Heart right ventricle (tissue), 16 donors: ENCODE measurements at regions of chr1 and their contacts with region 1.

Region 1: DNA sequence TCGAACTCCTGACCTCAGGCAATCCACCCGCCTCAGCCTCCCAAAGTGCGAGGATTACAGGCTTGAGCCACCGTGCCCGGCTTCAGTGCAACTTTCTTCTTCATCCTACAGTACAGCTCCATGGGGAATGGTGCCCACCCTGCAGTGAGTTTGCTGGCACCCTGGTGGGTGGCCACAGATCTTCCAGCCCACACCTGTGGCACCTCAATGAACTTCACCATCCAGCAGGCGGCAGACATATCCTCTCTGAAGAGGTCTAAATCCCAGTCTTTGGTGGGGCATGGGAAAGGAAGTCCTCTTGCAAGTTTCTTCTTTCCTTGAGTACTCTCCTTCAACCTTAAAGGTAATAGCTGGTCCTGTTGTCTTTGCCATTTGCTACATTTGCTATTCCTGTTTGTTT is 18.1 kb upstream of the ZBTB8A start:
- DNase-seq: no peak
- ATAC-seq: no peak
- H3K4me3 ChIP-seq: peak overlapping the region in 3 of 10 donors; percentile 41 to 46 (median 45)
- H3K27ac ChIP-seq: no peak overlapping the region
- H3K4me1 ChIP-seq: peaks cover 0 to 10% (median 0%) of the 10 kb centered on the region in 9 donors
- H3K27me3 ChIP-seq: no peaks in the 10 kb centered on the region
- CTCF ChIP-seq: no peak

Region 2: GRCh38 chr1:32377541-32378220 is 143.5 kb before region 1 on chr1:
- intact Hi-C with region 1: no loop called
- DNase-seq: no peak
- ATAC-seq: no peak
- H3K4me3 ChIP-seq: no peak overlapping the region
- H3K27ac ChIP-seq: no peak overlapping the region
- H3K4me1 ChIP-seq: no peaks in the 10 kb centered on the region
- H3K27me3 ChIP-seq: no peaks in the 10 kb centered on the region
- CTCF ChIP-seq: no peak

Region 3: DNA sequence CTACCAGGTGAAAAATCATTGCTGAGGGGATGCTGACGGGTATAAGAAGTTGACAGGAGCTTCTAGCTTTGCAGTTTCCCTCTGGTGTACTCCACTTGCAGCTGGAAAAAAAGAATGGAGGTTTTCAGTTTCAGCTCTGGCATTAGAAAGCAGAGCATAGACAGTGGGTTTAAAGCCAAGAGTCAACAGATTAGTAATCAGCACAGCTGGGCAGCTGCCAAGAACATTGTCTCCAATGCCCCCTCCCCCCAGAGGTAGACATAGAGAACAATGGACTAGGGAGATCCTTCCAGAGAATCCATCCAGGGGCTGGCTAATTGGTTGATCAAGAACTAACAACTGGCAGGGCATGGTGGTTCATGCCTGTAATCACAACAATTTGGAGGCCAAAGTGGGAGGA is 66.4 kb before region 1 on chr1:
- intact Hi-C with region 1: loop called in 1 of 10 experiments (anchors 5 kb)
- DNase-seq: peak; percentile 11 to 23
- ATAC-seq: peak in 3 of 8 donors; percentile 34 to 66 (median 53)
- H3K4me3 ChIP-seq: no peak overlapping the region
- H3K27ac ChIP-seq: no peak overlapping the region
- H3K4me1 ChIP-seq: peaks cover 0 to 7% (median 0%) of the 10 kb centered on the region in 9 donors
- H3K27me3 ChIP-seq: peaks cover 0 to 4% (median 0%) of the 10 kb centered on the region in 7 donors
- CTCF ChIP-seq: no peak

Region 4: GRCh38 chr1:32464716-32465577 is 56.2 kb before region 1 on chr1 and contains the start of gene ZBTB8B:
- intact Hi-C with region 1: no loop called
- DNase-seq: peak; percentile 63 to 72
- ATAC-seq: peak; percentile 93 to 98 (median 96)
- H3K4me3 ChIP-seq: peak within 1 kb of the TSS; percentile 28 to 68 (median 52)
- H3K27ac ChIP-seq: no peak within 1 kb of the TSS
- H3K4me1 ChIP-seq: peaks cover 4 to 19% (median 17%) of the 10 kb centered on the region in 9 donors
- H3K27me3 ChIP-seq: peaks cover 0 to 78% (median 58%) of the 10 kb centered on the region in 7 donors
- CTCF ChIP-seq: peak in 1 of 9 donors; percentile 10
- total RNA-seq, gene ZBTB8B: 0.02 to 0.04 (median 0.02) TPM in 5 of 10 donors, not detected in the others

Region 5: DNA sequence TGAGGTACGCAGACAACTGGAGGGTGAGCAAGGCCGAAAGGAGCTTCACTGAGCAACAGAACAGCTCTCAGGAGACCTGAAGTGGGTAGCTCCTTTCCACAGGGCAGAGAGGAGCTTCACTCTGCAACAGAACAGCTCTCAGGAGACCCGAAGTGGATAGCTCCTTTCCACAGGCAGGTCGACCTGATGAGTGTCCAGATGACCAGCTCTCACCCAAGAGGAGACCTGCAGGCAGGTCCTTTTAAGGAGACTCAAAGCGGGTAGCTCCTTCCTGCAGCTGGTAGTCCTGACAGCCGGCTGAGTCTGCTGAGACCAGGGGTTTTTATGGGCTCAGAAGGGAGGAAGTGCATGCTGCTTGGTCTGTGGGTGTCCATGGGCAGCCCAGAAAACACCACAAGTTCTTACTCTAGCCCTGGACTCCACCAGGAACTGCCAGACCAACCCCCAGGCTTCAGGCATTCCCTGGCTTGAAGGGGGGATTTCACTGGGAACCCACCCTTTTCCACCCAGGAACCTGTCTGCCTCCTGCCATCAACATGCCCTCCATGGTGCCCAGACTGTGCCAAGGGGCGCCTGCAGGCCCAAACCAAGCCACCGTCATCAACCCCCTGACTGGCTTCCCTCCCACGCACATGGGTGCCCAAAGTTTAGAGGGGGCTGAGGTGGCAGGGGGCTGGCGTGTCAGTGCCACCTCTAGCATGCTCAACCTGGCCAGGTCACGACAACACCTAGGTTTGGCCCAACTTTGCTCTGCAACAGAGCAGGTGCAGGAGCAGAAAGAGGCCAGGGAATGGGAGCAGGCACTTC is 85.6 kb after region 1 on chr1:
- intact Hi-C with region 1: loop called in 3 of 10 experiments (anchors 10 kb)
- DNase-seq: no peak
- ATAC-seq: no peak
- H3K4me3 ChIP-seq: no peak overlapping the region
- H3K27ac ChIP-seq: no peak overlapping the region
- H3K4me1 ChIP-seq: peaks cover 0 to 6% (median 0%) of the 10 kb centered on the region in 9 donors
- H3K27me3 ChIP-seq: no peaks in the 10 kb centered on the region
- CTCF ChIP-seq: no peak

Region 6: DNA sequence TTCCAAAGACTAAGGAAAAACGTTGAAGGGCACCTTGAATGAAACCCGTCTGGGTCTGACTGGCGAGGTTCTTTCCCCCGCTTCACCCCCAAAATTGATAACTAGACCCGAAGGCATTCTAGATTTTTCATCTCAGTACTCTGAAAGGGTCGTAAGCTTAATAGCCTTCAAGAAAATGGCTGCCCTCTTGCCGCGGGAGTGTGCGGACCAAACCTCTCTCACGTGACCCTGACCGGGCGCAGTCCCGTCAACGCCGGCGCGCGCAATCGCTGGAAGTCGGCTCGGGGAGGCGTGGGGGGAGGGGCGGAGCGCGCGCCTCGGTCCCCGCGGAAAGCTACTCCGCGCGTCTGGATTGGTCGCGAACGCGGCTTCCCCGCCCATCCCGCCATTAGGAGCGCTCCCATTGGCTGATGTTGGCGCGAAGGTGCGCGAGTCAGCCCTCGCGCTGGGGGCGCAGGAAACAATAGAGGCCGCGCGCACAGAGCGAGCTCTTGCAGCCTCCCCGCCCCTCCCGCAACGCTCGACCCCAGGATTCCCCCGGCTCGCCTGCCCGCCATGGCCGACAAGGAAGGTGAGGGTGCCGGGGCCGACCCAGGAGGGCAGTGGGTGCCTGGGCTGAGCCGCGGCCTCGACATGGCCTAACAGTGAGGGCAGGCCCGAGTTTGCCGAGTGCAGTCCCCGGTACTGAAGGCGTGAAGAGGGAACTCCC is 129.7 kb after region 1 on chr1 and contains the start of gene RBBP4:
- intact Hi-C with region 1: no loop called
- DNase-seq: peak; percentile 97 to 99
- ATAC-seq: peak; percentile 96 to 98 (median 97)
- H3K4me3 ChIP-seq: peak within 1 kb of the TSS; percentile 61 to 95 (median 79)
- H3K27ac ChIP-seq: peak within 1 kb of the TSS; percentile 93 to 100 (median 98)
- H3K4me1 ChIP-seq: peaks cover 3 to 65% (median 37%) of the 10 kb centered on the region in 9 donors
- H3K27me3 ChIP-seq: no peaks in the 10 kb centered on the region
- CTCF ChIP-seq: peak in 2 of 9 donors; percentile 4 to 36
- total RNA-seq, gene RBBP4: 86.6 to 119 (median 110) TPM